A673 (cell line): ENCODE measurements at regions of chr17 and their contacts with region 1.

Region 1: GRCh38 chr17:34361478-34362061 is 1.5 kb downstream of the CCL1 start:
- DNase-seq: peak; percentile 58
- H3K4me3 ChIP-seq: no peak overlapping the region
- H3K27ac ChIP-seq: no peak overlapping the region
- H3K4me1 ChIP-seq: no peaks in the 10 kb centered on the region
- H3K27me3 ChIP-seq: no peaks in the 10 kb centered on the region
- CTCF ChIP-seq: peak; percentile 83

Region 2: DNA sequence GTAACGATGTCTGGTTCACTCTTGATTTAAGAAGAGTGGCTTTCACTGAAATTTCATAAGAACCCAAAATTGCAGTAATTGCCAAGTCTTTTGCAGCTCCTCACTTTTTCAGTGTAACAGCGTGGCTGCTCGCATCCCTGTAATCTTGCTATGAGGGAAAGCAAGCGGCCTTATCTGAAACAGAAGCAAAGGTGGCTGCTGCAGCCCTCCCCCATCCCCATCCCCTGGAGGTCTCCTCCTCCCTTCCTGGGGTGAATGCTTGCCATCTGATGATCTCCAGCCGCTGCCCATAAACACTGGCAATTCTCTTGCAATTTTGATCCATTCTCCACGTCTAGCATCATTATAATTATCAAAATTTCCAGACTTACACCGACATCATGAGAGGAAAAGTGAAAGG is 886.0 kb before region 1 on chr17:
- CTCF ChIA-PET with region 1: no interaction called
- POLR2A ChIA-PET with region 1: no interaction called
- intact Hi-C with region 1: no loop called
- DNase-seq: no peak
- H3K4me3 ChIP-seq: no peak overlapping the region
- H3K27ac ChIP-seq: no peak overlapping the region
- H3K4me1 ChIP-seq: no peaks in the 10 kb centered on the region
- H3K27me3 ChIP-seq: no peaks in the 10 kb centered on the region
- CTCF ChIP-seq: no peak

Region 3: DNA sequence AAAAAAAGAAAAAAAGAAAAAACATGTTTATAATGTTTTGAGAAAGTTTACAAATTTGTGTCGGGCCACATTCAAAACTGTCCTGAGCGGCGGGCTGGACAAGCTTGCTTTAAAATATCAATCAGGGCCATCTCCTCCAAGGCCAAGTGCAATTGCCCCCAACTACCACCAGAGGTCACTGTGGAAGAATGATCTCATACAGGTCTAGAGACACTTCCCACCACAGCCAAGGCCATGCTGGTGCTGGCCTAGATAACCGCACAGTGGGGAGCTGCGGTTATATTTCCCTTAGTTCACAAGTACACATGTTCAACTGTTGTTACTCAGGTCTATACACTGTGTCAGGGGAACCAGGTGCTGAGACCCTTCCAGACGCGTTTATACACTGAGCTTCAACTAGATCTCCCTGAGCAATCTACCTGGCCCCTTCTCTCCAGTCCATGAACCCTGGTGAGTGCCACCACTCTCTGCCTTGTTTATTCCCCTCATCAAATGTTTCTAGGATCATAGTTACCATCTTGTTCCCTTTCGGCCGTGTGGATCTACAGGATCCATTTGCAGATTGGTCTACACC is 190.2 kb before region 1 on chr17:
- CTCF ChIA-PET with region 1: interaction called, 10 read pairs
- POLR2A ChIA-PET with region 1: no interaction called
- intact Hi-C with region 1: no loop called
- DNase-seq: peak; percentile 44
- H3K4me3 ChIP-seq: no peak overlapping the region
- H3K27ac ChIP-seq: no peak overlapping the region
- H3K4me1 ChIP-seq: no peaks in the 10 kb centered on the region
- H3K27me3 ChIP-seq: no peaks in the 10 kb centered on the region
- CTCF ChIP-seq: peak; percentile 63

Region 4: GRCh38 chr17:34199932-34200534 is 161.5 kb before region 1 on chr17:
- CTCF ChIA-PET with region 1: interaction called, 7 read pairs
- POLR2A ChIA-PET with region 1: no interaction called
- intact Hi-C with region 1: loop called (anchors 1 kb)
- DNase-seq: peak; percentile 63
- H3K4me3 ChIP-seq: no peak overlapping the region
- H3K27ac ChIP-seq: no peak overlapping the region
- H3K4me1 ChIP-seq: no peaks in the 10 kb centered on the region
- H3K27me3 ChIP-seq: no peaks in the 10 kb centered on the region
- CTCF ChIP-seq: peak; percentile 83